PC-9 (cell line): ENCODE measurements at regions of chr22 and their contacts with region 1.

Region 1: GRCh38 chr22:27329131-27329850 is 472.3 kb downstream of the MN1 start:
- DNase-seq: no peak
- H3K4me3 ChIP-seq: no peak overlapping the region
- H3K27ac ChIP-seq: no peak overlapping the region
- H3K4me1 ChIP-seq: no peaks in the 10 kb centered on the region
- H3K27me3 ChIP-seq: no peaks in the 10 kb centered on the region
- CTCF ChIP-seq: no peak

Region 2: GRCh38 chr22:26756675-26757293 is 572.5 kb before region 1 on chr22:
- CTCF ChIA-PET with region 1: no interaction called
- POLR2A ChIA-PET with region 1: no interaction called
- intact Hi-C with region 1: loop called (anchors 2 kb)
- DNase-seq: peak in 1 of 2 experiments; percentile 13
- H3K4me3 ChIP-seq: no peak overlapping the region
- H3K27ac ChIP-seq: no peak overlapping the region
- H3K4me1 ChIP-seq: no peaks in the 10 kb centered on the region
- H3K27me3 ChIP-seq: no peaks in the 10 kb centered on the region
- CTCF ChIP-seq: peak; percentile 91

Region 3: GRCh38 chr22:27292542-27293299 is 36.6 kb before region 1 on chr22:
- CTCF ChIA-PET with region 1: no interaction called
- POLR2A ChIA-PET with region 1: no interaction called
- intact Hi-C with region 1: no loop called
- DNase-seq: peak in 1 of 2 experiments; percentile 24
- H3K4me3 ChIP-seq: no peak overlapping the region
- H3K27ac ChIP-seq: no peak overlapping the region
- H3K4me1 ChIP-seq: no peaks in the 10 kb centered on the region
- H3K27me3 ChIP-seq: no peaks in the 10 kb centered on the region
- CTCF ChIP-seq: no peak